Esophagus muscularis mucosa (tissue), 4 donors: ENCODE measurements at regions of chr14 and their contacts with region 1.

Region 1: GRCh38 chr14:94080471-94081289 is at the start of gene DDX24:
- DNase-seq: peak; percentile 99
- H3K4me3 ChIP-seq: peak within 1 kb of the TSS; percentile 78 to 98 (median 91)
- H3K27ac ChIP-seq: peak within 1 kb of the TSS; percentile 94 to 96 (median 95)
- H3K4me1 ChIP-seq: peaks cover 48 to 56% (median 52%) of the 10 kb centered on the region in 4 donors
- H3K27me3 ChIP-seq: no peaks in the 10 kb centered on the region
- CTCF ChIP-seq: no peak
- EP300 ChIP-seq: no peak
- POLR2A ChIP-seq: peak; percentile 96
- total RNA-seq, gene DDX24: 142 to 215 (median 176) TPM

Region 2: GRCh38 chr14:94129111-94129757 is 48.6 kb after region 1 on chr14 and contains the start of gene IFI27L2:
- intact Hi-C with region 1: loop called (anchors 5 kb)
- DNase-seq: peak; percentile 93
- H3K4me3 ChIP-seq: peak within 1 kb of the TSS; percentile 51 to 74 (median 57)
- H3K27ac ChIP-seq: peak within 1 kb of the TSS; percentile 77 to 87 (median 84)
- H3K4me1 ChIP-seq: peaks cover 5 to 22% (median 21%) of the 10 kb centered on the region in 4 donors
- H3K27me3 ChIP-seq: no peaks in the 10 kb centered on the region
- CTCF ChIP-seq: peak; percentile 17 to 58 (median 28)
- EP300 ChIP-seq: no peak
- POLR2A ChIP-seq: no peak
- total RNA-seq, gene IFI27L2: 38.8 to 83.9 (median 64.7) TPM

Region 3: DNA sequence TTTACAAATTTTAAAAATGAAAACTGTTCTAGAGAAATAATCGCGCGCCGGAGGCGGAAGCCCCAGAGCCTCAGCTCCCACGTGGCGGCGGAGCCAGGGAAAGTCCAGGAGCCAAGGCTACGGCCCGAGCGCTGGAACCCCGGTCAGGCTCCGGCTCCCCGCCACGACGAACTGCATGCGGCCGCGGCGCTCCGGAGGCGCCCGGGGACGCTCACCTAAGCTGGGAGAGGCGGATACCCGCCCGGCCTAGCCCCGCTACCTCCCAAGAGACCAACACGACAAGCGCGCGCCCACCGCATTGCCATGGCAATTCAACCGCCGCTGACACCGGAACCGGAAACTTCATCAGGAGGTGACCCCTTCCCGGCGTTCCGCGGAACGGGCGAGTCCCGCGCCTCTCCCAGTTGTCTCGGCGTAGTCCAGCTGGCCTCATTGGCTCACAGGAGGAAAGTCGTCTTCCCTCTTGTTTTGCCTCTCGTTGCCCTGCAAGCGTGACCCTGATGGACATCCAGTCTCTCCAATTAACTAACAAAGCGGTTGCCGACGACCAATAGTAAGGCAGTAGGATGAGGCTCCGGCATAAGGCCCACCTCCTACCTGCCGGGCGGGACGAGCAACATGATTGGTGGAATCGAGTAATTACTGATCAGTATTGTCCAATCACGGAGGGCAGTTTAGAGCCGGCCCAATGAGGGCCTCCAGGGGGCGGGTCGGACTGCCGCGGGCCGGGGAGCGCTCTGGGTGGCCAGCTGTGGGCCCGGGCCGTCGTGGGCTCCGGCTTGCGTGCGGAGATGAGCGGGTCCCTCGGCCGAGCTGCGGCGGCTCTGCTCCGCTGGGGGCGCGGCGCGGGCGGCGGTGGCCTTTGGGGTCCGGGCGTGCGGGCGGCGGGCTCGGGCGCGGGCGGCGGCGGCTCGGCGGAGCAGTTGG is 1453.9 kb after region 1 on chr14 and contains the start of gene GLRX5:
- intact Hi-C with region 1: loop called (anchors 10 kb)
- DNase-seq: peak; percentile 100
- H3K4me3 ChIP-seq: peak within 1 kb of the TSS; percentile 95 to 99 (median 97)
- H3K27ac ChIP-seq: peak within 1 kb of the TSS; percentile 79 to 91 (median 86)
- H3K4me1 ChIP-seq: peaks cover 62 to 78% (median 70%) of the 10 kb centered on the region in 4 donors
- H3K27me3 ChIP-seq: no peaks in the 10 kb centered on the region
- CTCF ChIP-seq: peak in 1 of 3 experiments; percentile 22
- EP300 ChIP-seq: no peak
- POLR2A ChIP-seq: no peak
- total RNA-seq, gene GLRX5: 34.3 to 51.5 (median 43.5) TPM